CD4-positive, alpha-beta T cell (primary cell): ENCODE measurements at regions of chr1 and their contacts with region 1.

Region 1: GRCh38 chr1:197994907-197995407 is 77.8 kb downstream of the LHX9 start:
- DNase-seq: no peak
- ATAC-seq: no peak
- H3K4me3 ChIP-seq: no peak overlapping the region
- H3K4me3 Mint-ChIP-seq: no peak overlapping the region
- H3K27ac ChIP-seq: no peak overlapping the region
- H3K27ac Mint-ChIP-seq: no peak overlapping the region
- H3K4me1 ChIP-seq: no peaks in the 10 kb centered on the region
- H3K4me1 Mint-ChIP-seq: no peaks in the 10 kb centered on the region
- H3K27me3 ChIP-seq: no peaks in the 10 kb centered on the region
- H3K27me3 Mint-ChIP-seq: peaks cover 4% of the 10 kb centered on the region
- CTCF ChIP-seq: no peak

Region 2: GRCh38 chr1:198056255-198056654 is 61.3 kb after region 1 on chr1:
- CTCF ChIA-PET with region 1: no interaction called
- POLR2A ChIA-PET with region 1: no interaction called
- intact Hi-C with region 1: loop called in 1 of 2 experiments (anchors 10 kb)
- DNase-seq: peak in 2 of 14 experiments; percentile 4 to 16
- ATAC-seq: no peak
- H3K4me3 ChIP-seq: no peak overlapping the region
- H3K4me3 Mint-ChIP-seq: no peak overlapping the region
- H3K27ac ChIP-seq: no peak overlapping the region
- H3K27ac Mint-ChIP-seq: no peak overlapping the region
- H3K4me1 ChIP-seq: peaks cover 6% of the 10 kb centered on the region
- H3K4me1 Mint-ChIP-seq: no peaks in the 10 kb centered on the region
- H3K27me3 ChIP-seq: no peaks in the 10 kb centered on the region
- H3K27me3 Mint-ChIP-seq: peaks cover 4% of the 10 kb centered on the region
- CTCF ChIP-seq: no peak